ENCODE measurements at regions of chr12 and their contacts with region 1.

Region 1: GRCh38 chr12:81450920-81451739 is 308.0 kb downstream of the PPFIA2 start:
- DNase-seq: peak; percentile 72
- H3K4me3 Mint-ChIP-seq: no peak overlapping the region
- H3K27ac Mint-ChIP-seq: no peak overlapping the region
- H3K4me1 Mint-ChIP-seq: no peaks in the 10 kb centered on the region
- H3K27me3 Mint-ChIP-seq: no peaks in the 10 kb centered on the region
- CTCF ChIP-seq: peak; percentile 71

Region 2: GRCh38 chr12:81268664-81268926 is 182.5 kb before region 1 on chr12:
- CTCF ChIA-PET with region 1: no interaction called
- intact Hi-C with region 1: loop called (anchors 5 kb)
- DNase-seq: no peak
- H3K4me3 Mint-ChIP-seq: no peak overlapping the region
- H3K27ac Mint-ChIP-seq: no peak overlapping the region
- H3K4me1 Mint-ChIP-seq: no peaks in the 10 kb centered on the region
- H3K27me3 Mint-ChIP-seq: no peaks in the 10 kb centered on the region
- CTCF ChIP-seq: no peak

Region 3: DNA sequence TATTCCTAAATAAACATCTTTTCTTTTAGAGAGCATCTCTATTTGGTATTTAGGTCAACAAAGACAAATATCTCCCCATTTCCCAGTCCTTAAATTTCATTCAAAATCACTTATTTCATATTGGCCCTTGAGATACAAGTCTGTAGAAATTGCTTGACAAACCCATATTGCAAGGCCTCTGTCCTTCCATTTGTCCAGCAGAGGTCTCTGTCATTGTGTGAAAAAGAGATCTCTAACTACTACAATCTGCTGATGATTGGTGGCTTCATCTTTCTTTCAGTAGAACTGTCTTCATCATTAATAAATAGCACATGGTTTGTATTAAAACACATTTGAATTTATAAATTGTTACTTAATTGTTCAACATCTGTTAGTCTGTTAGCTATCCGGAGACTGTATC is 120.7 kb before region 1 on chr12:
- CTCF ChIA-PET with region 1: no interaction called
- intact Hi-C with region 1: loop called (anchors 5 kb)
- DNase-seq: no peak
- H3K4me3 Mint-ChIP-seq: no peak overlapping the region
- H3K27ac Mint-ChIP-seq: no peak overlapping the region
- H3K4me1 Mint-ChIP-seq: no peaks in the 10 kb centered on the region
- H3K27me3 Mint-ChIP-seq: no peaks in the 10 kb centered on the region
- CTCF ChIP-seq: no peak

Region 4: GRCh38 chr12:81627336-81628189 is 176.4 kb after region 1 on chr12:
- CTCF ChIA-PET with region 1: no interaction called
- intact Hi-C with region 1: loop called (anchors 1 kb)
- DNase-seq: peak; percentile 41
- H3K4me3 Mint-ChIP-seq: no peak overlapping the region
- H3K27ac Mint-ChIP-seq: no peak overlapping the region
- H3K4me1 Mint-ChIP-seq: no peaks in the 10 kb centered on the region
- H3K27me3 Mint-ChIP-seq: no peaks in the 10 kb centered on the region
- CTCF ChIP-seq: no peak

Region 5: DNA sequence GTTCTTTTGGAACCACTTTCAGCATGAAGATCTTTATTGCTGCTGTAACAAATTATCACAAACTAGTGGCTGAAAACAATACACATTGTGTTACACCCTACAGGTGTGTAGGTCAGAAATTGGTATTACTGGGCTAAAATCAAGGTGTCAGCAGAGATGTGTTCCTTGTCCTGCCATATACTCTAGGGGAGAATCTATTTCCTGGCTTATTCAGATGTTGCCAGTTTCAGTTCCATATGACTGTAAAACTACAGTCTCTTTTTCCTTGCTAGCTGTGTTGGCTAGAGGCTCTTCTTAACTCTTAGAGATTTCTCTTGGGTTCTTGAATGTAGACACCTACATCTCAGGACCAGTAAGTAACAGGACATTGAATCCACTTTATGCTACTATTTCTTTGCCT is 523.6 kb after region 1 on chr12:
- CTCF ChIA-PET with region 1: no interaction called
- intact Hi-C with region 1: no loop called
- DNase-seq: no peak
- H3K4me3 Mint-ChIP-seq: no peak overlapping the region
- H3K27ac Mint-ChIP-seq: no peak overlapping the region
- H3K4me1 Mint-ChIP-seq: no peaks in the 10 kb centered on the region
- H3K27me3 Mint-ChIP-seq: no peaks in the 10 kb centered on the region
- CTCF ChIP-seq: no peak

Region 6: GRCh38 chr12:82358200-82359114 is 907.3 kb after region 1 on chr12 and contains the starts of genes CCDC59 and METTL25:
- CTCF ChIA-PET with region 1: no interaction called
- intact Hi-C with region 1: loop called (anchors 10 kb)
- DNase-seq: peak; percentile 98
- H3K4me3 Mint-ChIP-seq: peak within 1 kb of the TSS; percentile 94
- H3K27ac Mint-ChIP-seq: peak within 1 kb of the TSS; percentile 100
- H3K4me1 Mint-ChIP-seq: peaks cover 17% of the 10 kb centered on the region
- H3K27me3 Mint-ChIP-seq: no peaks in the 10 kb centered on the region
- CTCF ChIP-seq: peak; percentile 91
- total RNA-seq, gene CCDC59: 51.7 and 55.8 TPM in 2 replicates
- total RNA-seq, gene METTL25: 6.7 and 7.2 TPM in 2 replicates